Ascending aorta (tissue), 2 donors: ENCODE measurements at regions of chr19 and their contacts with region 1.

Region 1: DNA sequence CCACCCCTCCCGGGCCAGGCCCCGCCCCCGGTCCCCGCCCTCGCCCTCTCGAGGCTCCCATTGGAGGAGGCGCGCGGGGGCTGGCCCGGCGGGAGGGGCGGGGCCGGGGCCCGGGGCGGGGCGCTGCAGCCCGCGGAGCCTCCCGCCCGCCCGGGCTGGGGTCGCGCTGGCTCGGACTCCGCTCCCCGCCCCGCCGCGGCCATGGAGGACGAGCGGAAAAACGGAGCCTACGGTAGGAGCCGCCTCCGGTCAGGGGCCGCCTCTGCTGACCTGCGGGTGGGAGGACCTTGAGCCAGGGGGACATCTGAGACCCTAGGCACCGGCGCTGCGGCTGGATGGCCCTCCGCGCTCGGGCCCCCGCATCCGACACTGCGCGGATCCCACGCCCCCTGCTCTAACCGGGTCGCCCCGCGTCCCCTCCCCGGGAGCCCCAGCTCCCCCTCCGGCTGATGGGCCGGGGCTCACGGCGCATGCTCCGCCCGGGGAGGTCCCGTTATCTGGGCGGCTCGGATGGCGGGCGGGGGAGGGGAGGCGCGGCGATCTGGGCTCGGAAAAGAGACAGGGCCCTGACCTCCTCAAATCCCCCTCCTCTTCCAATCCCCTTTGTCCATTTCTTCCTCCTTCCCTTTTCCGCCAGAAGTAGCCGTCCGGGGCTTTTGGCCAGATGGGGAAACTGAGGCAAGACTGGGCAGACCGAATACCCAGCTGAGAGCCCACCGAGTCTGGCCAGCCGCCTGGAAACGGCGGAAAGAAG is 15.4 kb upstream of the AP1M2 start:
- DNase-seq: peak; percentile 31 to 91
- H3K4me3 ChIP-seq: peak overlapping the region; percentile 97 to 99
- H3K27ac ChIP-seq: peak overlapping the region; percentile 98 to 99
- H3K4me1 ChIP-seq: peaks cover 10 to 26% of the 10 kb centered on the region in 2 donors
- H3K27me3 ChIP-seq: no peaks in the 10 kb centered on the region
- CTCF ChIP-seq: no peak

Region 2: GRCh38 chr19:10625003-10625776 is 22.7 kb after region 1 on chr19 and contains the start of gene SLC44A2:
- intact Hi-C with region 1: loop called (anchors 2 kb)
- DNase-seq: peak in 1 of 2 donors; percentile 83
- H3K4me3 ChIP-seq: peak within 1 kb of the TSS; percentile 67
- H3K27ac ChIP-seq: peak within 1 kb of the TSS; percentile 79 to 85
- H3K4me1 ChIP-seq: peaks cover 7 to 15% of the 10 kb centered on the region in 2 donors
- H3K27me3 ChIP-seq: no peaks in the 10 kb centered on the region
- CTCF ChIP-seq: no peak
- total RNA-seq, gene SLC44A2: 354 TPM

Region 3: GRCh38 chr19:10644260-10645007 is 41.9 kb after region 1 on chr19:
- intact Hi-C with region 1: loop called (anchors 5 kb)
- DNase-seq: peak; percentile 24 to 90
- H3K4me3 ChIP-seq: no peak overlapping the region
- H3K27ac ChIP-seq: peak overlapping the region; percentile 24 to 53
- H3K4me1 ChIP-seq: peaks cover 3 to 19% of the 10 kb centered on the region in 2 donors
- H3K27me3 ChIP-seq: no peaks in the 10 kb centered on the region
- CTCF ChIP-seq: peak; percentile 85 to 96 (median 87)

Region 4: GRCh38 chr19:10717356-10718204 is 115.1 kb after region 1 on chr19 and contains the start of gene DNM2:
- intact Hi-C with region 1: no loop called
- DNase-seq: peak; percentile 99 to 100
- H3K4me3 ChIP-seq: peak within 1 kb of the TSS; percentile 95 to 99
- H3K27ac ChIP-seq: peak within 1 kb of the TSS; percentile 89 to 94
- H3K4me1 ChIP-seq: peaks cover 0 to 23% of the 10 kb centered on the region in 2 donors
- H3K27me3 ChIP-seq: no peaks in the 10 kb centered on the region
- CTCF ChIP-seq: peak; percentile 80 to 90 (median 82)
- total RNA-seq, gene DNM2: 113 TPM